Transverse colon (tissue), 4 donors: ENCODE measurements at regions of chr20 and their contacts with region 1.

Region 1: DNA sequence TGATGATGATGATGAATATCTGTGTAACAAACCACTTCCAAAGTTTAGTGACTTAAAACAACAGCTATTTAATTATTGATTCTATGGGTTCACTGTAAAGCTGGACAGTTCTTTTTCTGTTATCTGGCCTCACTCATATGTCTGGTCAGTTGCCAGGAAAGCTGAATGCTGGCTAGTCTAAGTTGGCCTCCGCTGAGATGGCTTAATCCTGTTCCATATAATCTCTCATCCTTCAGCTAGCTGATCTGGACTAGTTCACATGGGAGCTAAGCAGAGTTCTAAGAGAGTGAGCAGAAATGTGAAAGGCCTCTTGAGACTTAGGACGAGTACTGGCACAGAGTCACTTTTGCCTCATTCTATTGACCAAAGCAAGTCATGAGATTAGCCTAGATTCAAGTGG is 334.7 kb upstream of the FLRT3 start:
- DNase-seq: no peak
- H3K4me3 ChIP-seq: no peak overlapping the region
- H3K27ac ChIP-seq: no peak overlapping the region
- H3K4me1 ChIP-seq: peaks cover 0 to 4% (median 0%) of the 10 kb centered on the region in 4 donors
- H3K27me3 ChIP-seq: no peaks in the 10 kb centered on the region
- CTCF ChIP-seq: no peak
- EP300 ChIP-seq: no peak
- POLR2A ChIP-seq: no peak

Region 2: DNA sequence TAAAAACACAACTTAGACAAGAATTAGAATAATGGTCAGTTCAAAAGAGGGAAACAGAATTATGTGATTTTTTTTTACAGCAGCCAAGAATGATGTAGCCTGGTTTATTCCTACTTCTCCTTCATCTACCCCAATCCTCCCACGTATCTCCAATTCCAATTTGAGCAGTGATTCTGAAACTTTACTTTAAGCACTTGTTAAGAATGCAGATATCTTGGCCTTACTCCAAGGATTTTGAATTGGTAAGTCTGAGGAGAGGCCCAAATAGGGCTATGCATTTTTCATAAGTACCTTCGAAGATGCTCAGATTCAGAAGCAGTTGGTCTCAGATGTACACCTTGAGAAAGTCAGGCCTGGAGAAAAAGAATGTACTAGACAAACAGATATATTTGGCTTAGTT is 101.3 kb before region 1 on chr20:
- in situ Hi-C with region 1: no loop called
- intact Hi-C with region 1: no loop called
- DNase-seq: no peak
- H3K4me3 ChIP-seq: no peak overlapping the region
- H3K27ac ChIP-seq: no peak overlapping the region
- H3K4me1 ChIP-seq: no peaks in the 10 kb centered on the region
- H3K27me3 ChIP-seq: no peaks in the 10 kb centered on the region
- CTCF ChIP-seq: no peak
- EP300 ChIP-seq: no peak
- POLR2A ChIP-seq: no peak

Region 3: DNA sequence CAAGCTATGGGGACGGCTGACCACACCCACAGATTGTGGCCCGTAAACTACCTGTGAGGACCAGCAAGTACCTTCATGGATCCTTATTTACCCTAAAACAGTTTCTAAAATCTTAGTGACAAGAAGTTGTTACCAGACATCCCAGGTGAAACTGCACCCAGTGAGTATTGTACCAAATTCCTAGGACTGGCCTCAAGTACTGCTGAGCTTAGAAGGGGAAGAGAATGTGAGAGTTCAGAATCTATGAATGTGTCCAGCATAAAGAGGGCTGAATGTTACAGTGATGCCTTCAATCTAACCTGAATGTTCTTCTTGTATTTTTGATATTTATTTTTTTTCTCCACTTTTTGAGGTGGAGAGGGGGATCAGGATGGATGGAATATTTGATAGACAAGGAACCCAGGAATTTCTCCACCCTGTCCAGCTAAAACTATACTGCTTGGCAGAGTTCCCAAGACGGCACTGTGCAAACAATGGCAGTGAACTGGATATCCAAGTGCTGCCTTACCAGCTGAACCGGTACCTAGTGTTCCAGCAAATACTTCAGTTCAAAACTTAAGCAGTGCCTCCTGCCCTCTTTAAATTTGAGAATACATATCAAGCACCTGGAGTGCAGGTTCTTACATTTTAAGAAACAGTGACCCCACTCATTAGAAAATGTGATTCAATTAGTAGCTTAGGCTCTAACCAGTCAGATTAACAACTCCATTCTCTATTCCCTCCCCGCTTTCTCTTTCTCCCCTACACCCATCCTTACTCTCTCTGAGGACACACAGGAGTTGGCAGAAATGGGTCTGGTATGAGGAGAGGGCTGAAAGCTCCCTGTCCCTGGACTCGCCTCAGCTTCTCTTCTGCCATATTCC is 92.7 kb after region 1 on chr20:
- in situ Hi-C with region 1: loop called in 1 of 4 experiments (anchors 25 kb)
- intact Hi-C with region 1: no loop called
- DNase-seq: peak; percentile 44
- H3K4me3 ChIP-seq: no peak overlapping the region
- H3K27ac ChIP-seq: no peak overlapping the region
- H3K4me1 ChIP-seq: no peaks in the 10 kb centered on the region
- H3K27me3 ChIP-seq: no peaks in the 10 kb centered on the region
- CTCF ChIP-seq: no peak
- EP300 ChIP-seq: no peak
- POLR2A ChIP-seq: no peak

Region 4: GRCh38 chr20:14801591-14802325 is 129.7 kb after region 1 on chr20:
- in situ Hi-C with region 1: no loop called
- intact Hi-C with region 1: no loop called
- DNase-seq: no peak
- H3K4me3 ChIP-seq: no peak overlapping the region
- H3K27ac ChIP-seq: no peak overlapping the region
- H3K4me1 ChIP-seq: no peaks in the 10 kb centered on the region
- H3K27me3 ChIP-seq: no peaks in the 10 kb centered on the region
- CTCF ChIP-seq: no peak
- EP300 ChIP-seq: no peak
- POLR2A ChIP-seq: no peak

Region 5: DNA sequence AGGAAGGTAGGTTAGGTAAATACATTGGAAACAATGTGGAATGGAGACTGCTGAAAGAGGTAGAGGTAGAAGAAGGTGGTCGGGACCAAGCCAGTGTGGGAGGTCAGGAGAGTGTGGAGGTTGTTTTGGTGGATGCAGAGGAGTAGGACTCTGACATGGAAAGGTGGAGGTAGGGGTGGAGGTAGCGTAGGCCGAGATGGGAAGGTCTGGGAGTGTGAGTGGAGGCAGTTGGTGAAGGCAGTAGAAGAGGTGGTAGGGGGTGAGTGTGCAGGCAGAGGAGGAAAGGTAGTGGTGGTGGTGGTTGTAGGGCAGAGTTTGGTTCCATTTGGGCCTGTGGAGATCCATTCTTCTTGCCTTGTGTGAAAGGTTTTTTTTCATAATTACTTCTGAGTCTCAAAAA is 265.0 kb after region 1 on chr20:
- in situ Hi-C with region 1: no loop called
- intact Hi-C with region 1: no loop called
- DNase-seq: no peak
- H3K4me3 ChIP-seq: no peak overlapping the region
- H3K27ac ChIP-seq: no peak overlapping the region
- H3K4me1 ChIP-seq: no peaks in the 10 kb centered on the region
- H3K27me3 ChIP-seq: no peaks in the 10 kb centered on the region
- CTCF ChIP-seq: no peak
- EP300 ChIP-seq: no peak
- POLR2A ChIP-seq: no peak